ENCODE measurements at regions of chr4 and their contacts with region 1.

Region 1: DNA sequence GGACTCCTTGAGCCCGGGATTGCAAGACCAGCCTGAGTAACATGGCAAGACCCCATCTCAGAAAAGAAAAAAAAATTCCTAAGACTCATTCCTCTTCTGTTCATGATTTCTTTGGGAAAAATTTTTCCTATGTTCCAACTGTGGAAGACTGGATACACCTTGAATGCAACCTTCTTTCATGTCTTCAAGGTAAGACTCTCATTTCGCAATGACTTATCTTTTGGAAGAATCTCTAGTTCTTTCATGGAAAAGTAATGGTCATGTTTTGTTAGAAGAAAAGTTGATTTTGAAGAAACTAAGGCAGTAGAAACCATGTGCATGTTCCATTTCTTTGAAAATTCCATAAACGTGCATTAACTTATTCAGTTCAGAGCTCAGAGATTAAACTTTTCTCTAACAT is 26.0 kb upstream of the BBS12 start:
- DNase-seq: no peak
- ATAC-seq: no peak
- H3K4me3 ChIP-seq: no peak overlapping the region
- H3K27ac ChIP-seq: no peak overlapping the region
- H3K4me1 ChIP-seq: no peaks in the 10 kb centered on the region; the same call in 1 of the 2 replicates
- H3K27me3 ChIP-seq: no peaks in the 10 kb centered on the region
- CTCF ChIP-seq: no peak

Region 2: DNA sequence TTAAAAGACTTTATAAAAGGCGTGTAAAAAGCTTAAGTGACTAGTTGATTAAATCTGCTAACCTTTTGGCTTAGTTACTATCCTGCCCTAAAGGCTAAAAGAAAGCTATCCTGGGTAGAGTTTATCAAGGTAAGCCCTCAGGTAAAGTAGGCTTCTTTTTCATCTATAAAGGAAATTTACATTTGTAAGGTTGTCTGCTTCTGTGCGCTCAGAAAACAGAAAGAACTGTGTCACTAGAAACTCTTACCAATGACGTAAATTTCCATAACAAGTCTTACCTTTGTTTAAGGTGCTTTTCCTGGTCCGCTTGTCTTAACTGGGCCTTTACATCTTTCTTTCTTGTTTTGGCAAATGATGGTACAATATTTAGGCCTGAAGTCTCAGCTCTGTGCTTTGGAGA is 82.4 kb after region 1 on chr4:
- CTCF ChIA-PET with region 1: no interaction called
- POLR2A ChIA-PET with region 1: interaction called, 16 read pairs
- in situ Hi-C with region 1: no loop called
- intact Hi-C with region 1: no loop called
- DNase-seq: no peak
- ATAC-seq: no peak
- H3K4me3 ChIP-seq: no peak overlapping the region
- H3K27ac ChIP-seq: no peak overlapping the region
- H3K4me1 ChIP-seq: peaks cover 5% of the 10 kb centered on the region; the same call in 1 of the 2 replicates
- H3K27me3 ChIP-seq: no peaks in the 10 kb centered on the region
- CTCF ChIP-seq: no peak

Region 3: GRCh38 chr4:122830426-122831095 is 124.0 kb after region 1 on chr4:
- CTCF ChIA-PET with region 1: no interaction called
- POLR2A ChIA-PET with region 1: no interaction called
- in situ Hi-C with region 1: no loop called
- intact Hi-C with region 1: no loop called
- DNase-seq: no peak
- ATAC-seq: no peak
- H3K4me3 ChIP-seq: no peak overlapping the region; a peak in 1 of 4 replicates
- H3K27ac ChIP-seq: no peak overlapping the region
- H3K4me1 ChIP-seq: peaks cover 25% of the 10 kb centered on the region
- H3K27me3 ChIP-seq: no peaks in the 10 kb centered on the region
- CTCF ChIP-seq: no peak